Ovary (tissue), 10 donors: ENCODE measurements at regions of chr1 and their contacts with region 1.

Region 1: GRCh38 chr1:165928075-165928731 is 100.8 kb downstream of the UCK2 start:
- DNase-seq: no peak
- H3K4me3 ChIP-seq: no peak overlapping the region
- H3K27ac ChIP-seq: no peak overlapping the region
- H3K4me1 ChIP-seq: no peaks in the 10 kb centered on the region
- H3K27me3 ChIP-seq: no peaks in the 10 kb centered on the region
- CTCF ChIP-seq: no peak
- EP300 ChIP-seq: no peak
- POLR2A ChIP-seq: no peak

Region 2: GRCh38 chr1:165467706-165468105 is 460.5 kb before region 1 on chr1:
- intact Hi-C with region 1: no loop called
- DNase-seq: no peak
- H3K4me3 ChIP-seq: no peak overlapping the region
- H3K27ac ChIP-seq: no peak overlapping the region
- H3K4me1 ChIP-seq: no peaks in the 10 kb centered on the region
- H3K27me3 ChIP-seq: no peaks in the 10 kb centered on the region
- CTCF ChIP-seq: no peak
- EP300 ChIP-seq: no peak
- POLR2A ChIP-seq: no peak

Region 3: GRCh38 chr1:166479052-166479631 is 550.9 kb after region 1 on chr1:
- intact Hi-C with region 1: loop called in 1 of 4 experiments (anchors 5 kb)
- DNase-seq: peak in 4 of 5 donors; percentile 24 to 35 (median 28)
- H3K4me3 ChIP-seq: no peak overlapping the region
- H3K27ac ChIP-seq: no peak overlapping the region
- H3K4me1 ChIP-seq: no peaks in the 10 kb centered on the region
- H3K27me3 ChIP-seq: no peaks in the 10 kb centered on the region
- CTCF ChIP-seq: peak; percentile 14 to 32 (median 30)
- EP300 ChIP-seq: no peak
- POLR2A ChIP-seq: no peak